Endothelial cell of umbilical vein (primary cell): ENCODE measurements at regions of chr15 and their contacts with region 1.

Region 1: GRCh38 chr15:59299929-59300617 is 72.6 kb downstream of the MYO1E start:
- DNase-seq: peak; percentile 94
- H3K4me3 ChIP-seq: peak overlapping the region in 1 of 3 experiments; percentile 28
- H3K27ac ChIP-seq: peak overlapping the region; percentile 78
- H3K4me1 ChIP-seq: peaks cover 54% of the 10 kb centered on the region
- H3K27me3 ChIP-seq: no peaks in the 10 kb centered on the region
- CTCF ChIP-seq: no peak
- POLR2A ChIP-seq: no peak

Region 2: GRCh38 chr15:59349680-59350420 is 49.8 kb after region 1 on chr15:
- CTCF ChIA-PET with region 1: no interaction called
- POLR2A ChIA-PET with region 1: no interaction called
- dilution Hi-C with region 1: no loop called
- intact Hi-C with region 1: loop called (anchors 1 kb)
- DNase-seq: peak; percentile 89
- H3K4me3 ChIP-seq: no peak overlapping the region
- H3K27ac ChIP-seq: peak overlapping the region; percentile 81
- H3K4me1 ChIP-seq: peaks cover 48% of the 10 kb centered on the region
- H3K27me3 ChIP-seq: no peaks in the 10 kb centered on the region
- CTCF ChIP-seq: no peak
- POLR2A ChIP-seq: no peak

Region 3: GRCh38 chr15:59388670-59389069 is 88.6 kb after region 1 on chr15:
- CTCF ChIA-PET with region 1: no interaction called
- POLR2A ChIA-PET with region 1: no interaction called
- dilution Hi-C with region 1: no loop called
- intact Hi-C with region 1: no loop called
- DNase-seq: peak; percentile 11
- H3K4me3 ChIP-seq: no peak overlapping the region
- H3K27ac ChIP-seq: no peak overlapping the region
- H3K4me1 ChIP-seq: no peaks in the 10 kb centered on the region
- H3K27me3 ChIP-seq: no peaks in the 10 kb centered on the region
- CTCF ChIP-seq: no peak
- POLR2A ChIP-seq: no peak